ENCODE measurements at regions of chr1 and their contacts with region 1.

Region 1: GRCh38 chr1:33735621-33736020 is 128.3 kb upstream of the HMGB4 start:
- DNase-seq: no peak
- ATAC-seq: no peak
- H3K4me3 ChIP-seq: no peak overlapping the region
- H3K27ac ChIP-seq: no peak overlapping the region
- H3K4me1 ChIP-seq: no peaks in the 10 kb centered on the region
- H3K27me3 ChIP-seq: no peaks in the 10 kb centered on the region
- CTCF ChIP-seq: 0 out of 2 replicates have a peak, but pooled peaks have one; percentile 20
- POLR2A ChIP-seq: no peak
- RAD21 ChIP-seq: no peak

Region 2: GRCh38 chr1:33384040-33384812 is 351.4 kb before region 1 on chr1:
- CTCF ChIA-PET with region 1: no interaction called
- POLR2A ChIA-PET with region 1: no interaction called
- dilution Hi-C with region 1: no loop called
- in situ Hi-C with region 1: no loop called
- intact Hi-C with region 1: no loop called
- DNase-seq: peak; percentile 86
- ATAC-seq: peak; percentile 69
- H3K4me3 ChIP-seq: no peak overlapping the region
- H3K27ac ChIP-seq: peak overlapping the region; percentile 46; the same call in 1 of the 2 replicates
- H3K4me1 ChIP-seq: peaks cover 47% of the 10 kb centered on the region
- H3K27me3 ChIP-seq: no peaks in the 10 kb centered on the region
- CTCF ChIP-seq: no peak
- POLR2A ChIP-seq: no peak
- RAD21 ChIP-seq: no peak

Region 3: DNA sequence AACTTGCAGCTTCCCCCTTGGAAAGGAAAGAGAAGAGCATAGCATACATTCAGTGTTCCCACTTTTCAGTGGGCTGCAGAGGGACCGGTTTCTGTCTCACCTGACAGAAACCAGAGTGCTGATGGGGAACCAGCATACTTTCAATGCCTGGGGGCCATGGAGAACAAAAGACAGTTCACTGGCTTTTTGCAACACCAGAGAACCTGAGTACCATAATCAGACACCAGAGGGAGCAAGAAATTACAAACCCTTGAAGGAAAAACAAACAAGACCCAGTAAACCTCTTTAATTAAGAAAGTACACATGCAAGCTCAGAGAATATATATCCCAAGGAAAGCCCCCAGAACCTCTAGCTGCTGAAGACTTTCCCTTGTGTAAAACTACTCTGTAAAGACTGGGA is 378.3 kb after region 1 on chr1:
- CTCF ChIA-PET with region 1: no interaction called
- POLR2A ChIA-PET with region 1: no interaction called
- dilution Hi-C with region 1: no loop called
- in situ Hi-C with region 1: no loop called
- intact Hi-C with region 1: loop called (anchors 5 kb)
- DNase-seq: no peak
- ATAC-seq: no peak
- H3K4me3 ChIP-seq: no peak overlapping the region
- H3K27ac ChIP-seq: no peak overlapping the region
- H3K4me1 ChIP-seq: no peaks in the 10 kb centered on the region
- H3K27me3 ChIP-seq: no peaks in the 10 kb centered on the region
- CTCF ChIP-seq: no peak
- POLR2A ChIP-seq: no peak
- RAD21 ChIP-seq: no peak

Region 4: DNA sequence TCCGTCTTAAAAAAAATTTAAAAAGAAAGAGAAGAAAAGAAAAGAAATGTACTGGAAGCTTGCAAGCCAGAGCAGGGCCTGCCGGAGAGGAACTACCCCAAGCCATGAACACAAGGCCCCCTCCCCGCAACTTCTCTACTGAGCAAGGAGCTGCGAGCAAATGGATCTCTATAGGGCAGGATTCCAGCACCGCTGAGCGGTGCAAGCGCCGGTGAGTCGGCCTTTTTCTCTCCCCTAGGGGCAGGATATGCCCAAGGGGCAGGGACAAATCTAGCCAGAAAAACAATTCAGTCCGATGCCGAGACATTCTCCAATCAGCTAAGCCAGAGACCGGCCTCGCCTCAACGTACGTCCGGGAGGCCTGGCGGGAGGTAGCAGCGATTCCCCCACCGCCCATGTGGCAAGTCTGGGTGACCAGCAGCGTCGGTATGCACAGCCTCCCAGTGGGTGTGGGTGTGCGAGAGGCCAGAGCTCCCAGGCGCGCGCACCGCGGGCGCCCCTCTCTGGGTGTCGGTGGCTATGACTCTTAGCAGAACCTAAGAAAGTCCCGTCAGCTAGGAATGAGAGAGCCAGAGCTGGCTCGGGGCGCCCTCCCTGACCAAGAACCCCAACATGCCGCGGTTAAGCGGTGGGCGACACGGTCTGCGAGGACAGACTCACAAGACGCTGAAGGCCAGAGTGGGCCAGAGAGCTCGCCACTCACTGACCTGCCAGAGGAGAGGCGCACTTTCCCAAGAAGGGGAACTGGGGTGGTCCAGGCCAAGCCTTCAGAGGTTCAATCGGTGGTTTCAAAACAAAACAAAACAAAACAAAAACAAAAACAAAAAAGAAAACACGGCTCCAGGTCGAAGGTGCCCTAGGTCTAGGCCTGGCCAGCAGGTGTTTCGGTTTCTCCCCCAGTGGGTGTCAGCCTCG is 427.5 kb after region 1 on chr1:
- CTCF ChIA-PET with region 1: no interaction called
- POLR2A ChIA-PET with region 1: no interaction called
- dilution Hi-C with region 1: no loop called
- in situ Hi-C with region 1: no loop called
- intact Hi-C with region 1: loop called (anchors 1 kb)
- DNase-seq: peak; percentile 74
- ATAC-seq: peak; percentile 88
- H3K4me3 ChIP-seq: peak overlapping the region; percentile 19; the same call in 1 of the 2 replicates
- H3K27ac ChIP-seq: no peak overlapping the region
- H3K4me1 ChIP-seq: no peaks in the 10 kb centered on the region; the same call in 1 of the 2 replicates
- H3K27me3 ChIP-seq: peaks cover 15% of the 10 kb centered on the region
- CTCF ChIP-seq: peak; percentile 59
- POLR2A ChIP-seq: no peak
- RAD21 ChIP-seq: peak; percentile 68

Region 5: DNA sequence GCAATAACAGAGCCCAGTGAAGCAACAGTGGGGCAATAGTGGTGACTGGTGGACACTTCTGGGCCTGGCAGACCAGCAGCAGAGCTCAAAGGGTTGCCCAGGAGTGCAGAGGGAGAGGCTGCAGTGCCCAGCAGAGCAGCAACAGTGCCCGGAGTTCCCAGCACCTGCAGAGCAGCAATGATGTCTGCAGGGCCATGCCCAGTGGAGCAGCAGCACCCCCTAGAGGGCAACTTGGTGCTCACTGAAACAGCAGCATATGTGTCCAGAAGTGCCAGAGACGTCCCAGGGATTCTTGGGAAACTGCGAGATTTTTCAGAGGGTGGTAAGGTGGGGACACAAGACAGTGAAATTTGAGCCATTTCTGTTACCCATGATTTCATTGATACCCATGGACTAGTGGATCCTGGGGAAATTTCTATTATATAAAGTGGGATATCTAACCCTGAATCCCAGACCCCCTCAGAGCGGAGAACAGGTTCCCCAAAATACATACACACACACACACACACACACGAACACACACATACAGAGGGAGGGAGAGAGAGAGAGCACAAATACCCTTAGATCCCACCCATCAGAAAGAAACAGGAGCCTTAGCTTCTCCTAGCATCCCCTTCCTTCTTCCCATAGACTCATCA is 862.4 kb after region 1 on chr1:
- CTCF ChIA-PET with region 1: no interaction called
- POLR2A ChIA-PET with region 1: no interaction called
- dilution Hi-C with region 1: no loop called
- in situ Hi-C with region 1: no loop called
- intact Hi-C with region 1: loop called (anchors 5 kb)
- DNase-seq: peak; percentile 6
- ATAC-seq: peak; percentile 68
- H3K4me3 ChIP-seq: no peak overlapping the region
- H3K27ac ChIP-seq: no peak overlapping the region
- H3K4me1 ChIP-seq: no peaks in the 10 kb centered on the region
- H3K27me3 ChIP-seq: no peaks in the 10 kb centered on the region
- CTCF ChIP-seq: peak; percentile 41
- POLR2A ChIP-seq: no peak
- RAD21 ChIP-seq: peak; percentile 55

Measured in IMR-90 (cell line).